Activated T-helper 1 cell treated with anti-CD3 and anti-CD28 coated beads, Interleukin-12 subunit alpha, Interleukin-12 subunit beta, Interleukin-2, Interleukin-4 antibody, amounts not matched to agents 30 ng/mL and 10 ng/mL and 1 ng/mL, durations not matched to agents 14 hours and 24 hours and 36 hours (primary cell): ENCODE measurements at regions of chr2 and their contacts with region 1.

Region 1: DNA sequence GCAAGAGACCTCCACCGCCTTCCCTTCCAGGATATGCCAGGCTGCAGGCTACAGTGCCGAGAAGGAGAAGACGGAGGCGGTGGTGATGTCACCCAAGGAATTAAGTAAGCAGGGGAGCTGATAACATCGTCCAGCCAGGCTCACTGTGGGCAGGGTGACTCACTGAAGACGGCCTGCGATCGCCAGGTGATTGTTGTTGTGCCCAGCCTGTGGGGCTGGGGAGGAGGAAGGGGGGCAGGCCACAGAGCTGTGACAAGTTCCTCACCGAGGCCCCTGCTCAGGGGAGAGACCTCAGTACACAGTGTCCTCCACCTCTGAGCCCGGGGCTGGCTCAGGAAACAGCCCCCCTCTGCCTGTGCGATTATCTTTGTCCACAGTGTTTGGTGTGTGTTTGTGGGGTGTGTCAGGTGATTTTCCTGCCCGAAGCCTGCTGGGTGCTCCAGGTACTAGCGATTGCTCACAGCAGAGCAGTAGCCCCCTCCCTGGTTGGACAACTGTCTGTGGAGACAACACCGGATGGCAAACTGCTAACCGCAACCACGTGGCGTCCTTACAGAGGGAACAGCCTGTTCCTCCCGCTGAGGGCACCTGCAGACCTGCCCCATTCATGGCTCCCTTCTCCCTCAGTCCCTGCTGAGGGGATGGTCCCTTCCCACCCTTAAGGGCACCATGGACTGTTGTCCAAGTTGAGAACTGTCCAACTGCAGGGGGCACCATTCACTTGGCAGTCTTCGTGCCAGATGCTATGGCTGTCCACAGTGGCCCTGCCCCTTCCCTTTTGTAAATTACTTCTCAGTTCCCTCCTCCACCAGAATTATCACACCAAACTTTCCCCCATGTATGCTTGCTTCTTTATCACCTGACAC is 95.1 kb downstream of the ZFP36L2 start:
- DNase-seq: peak; percentile 73
- H3K4me3 Mint-ChIP-seq: peak overlapping the region; percentile 45
- H3K27ac Mint-ChIP-seq: peak overlapping the region; percentile 83
- H3K4me1 Mint-ChIP-seq: peaks cover 83% of the 10 kb centered on the region
- H3K27me3 Mint-ChIP-seq: no peaks in the 10 kb centered on the region

Region 2: GRCh38 chr2:42947809-42948600 is 183.3 kb before region 1 on chr2:
- intact Hi-C with region 1: loop called (anchors 2 kb)
- DNase-seq: no peak
- H3K4me3 Mint-ChIP-seq: no peak overlapping the region
- H3K27ac Mint-ChIP-seq: no peak overlapping the region
- H3K4me1 Mint-ChIP-seq: peaks cover 7% of the 10 kb centered on the region
- H3K27me3 Mint-ChIP-seq: peaks cover 15% of the 10 kb centered on the region

Region 3: DNA sequence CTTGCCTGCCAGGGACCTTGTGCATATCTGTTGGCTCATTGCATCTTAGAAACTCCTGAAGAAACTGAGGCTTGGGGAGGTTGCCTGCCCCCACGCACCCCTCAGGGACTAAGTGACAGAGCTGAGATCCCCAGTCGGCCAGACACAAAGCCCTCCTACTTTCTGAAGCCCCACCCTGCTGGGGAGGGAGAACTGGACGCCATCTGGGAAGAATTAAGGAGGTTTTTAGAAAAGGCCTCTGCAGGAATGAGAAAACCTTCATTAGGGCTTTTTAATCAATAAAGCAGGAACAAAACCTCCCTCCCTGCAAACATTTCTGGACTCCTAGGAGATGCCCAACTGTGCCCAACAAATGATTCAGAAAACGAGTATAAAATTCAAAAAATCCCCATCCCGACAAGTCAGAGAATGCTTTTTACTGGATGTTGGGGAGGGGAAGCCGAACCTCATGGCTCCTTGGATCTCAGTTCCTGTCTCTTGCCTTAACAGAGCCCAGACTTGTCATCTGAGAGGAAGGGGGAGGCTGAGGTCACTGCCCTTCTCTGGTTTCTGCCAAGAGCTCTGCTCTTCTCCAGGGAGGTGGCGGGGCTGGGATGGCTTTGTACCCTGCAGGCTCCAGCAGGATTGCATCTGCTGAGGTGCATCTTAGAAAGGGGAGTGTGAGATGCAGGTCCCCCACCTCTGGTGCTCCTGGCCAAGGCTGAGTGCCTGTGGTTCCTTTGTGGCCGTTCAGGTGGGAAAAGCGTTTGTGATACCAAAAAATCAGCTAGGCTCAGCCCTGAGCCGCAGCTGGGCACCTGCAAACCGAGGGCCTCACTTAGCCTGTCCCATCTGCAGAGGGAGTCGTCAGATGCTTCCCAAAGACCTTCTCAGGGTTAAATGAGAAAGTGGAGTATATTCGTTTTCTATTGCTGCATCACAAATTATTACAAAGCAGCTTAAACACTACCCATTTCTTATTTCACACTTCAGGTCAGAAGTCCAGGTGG is 47.3 kb before region 1 on chr2:
- intact Hi-C with region 1: no loop called
- DNase-seq: no peak
- H3K4me3 Mint-ChIP-seq: no peak overlapping the region
- H3K27ac Mint-ChIP-seq: no peak overlapping the region
- H3K4me1 Mint-ChIP-seq: no peaks in the 10 kb centered on the region
- H3K27me3 Mint-ChIP-seq: peaks cover 2% of the 10 kb centered on the region

Region 4: GRCh38 chr2:43158259-43158880 is 27.1 kb after region 1 on chr2:
- intact Hi-C with region 1: loop called (anchors 1 kb)
- DNase-seq: peak; percentile 59
- H3K4me3 Mint-ChIP-seq: peak overlapping the region; percentile 74
- H3K27ac Mint-ChIP-seq: peak overlapping the region; percentile 99
- H3K4me1 Mint-ChIP-seq: peaks cover 49% of the 10 kb centered on the region
- H3K27me3 Mint-ChIP-seq: no peaks in the 10 kb centered on the region

Region 5: GRCh38 chr2:43219383-43220228 is 88.3 kb after region 1 on chr2:
- intact Hi-C with region 1: loop called (anchors 1 kb)
- DNase-seq: peak; percentile 78
- H3K4me3 Mint-ChIP-seq: peak overlapping the region; percentile 94
- H3K27ac Mint-ChIP-seq: peak overlapping the region; percentile 88
- H3K4me1 Mint-ChIP-seq: peaks cover 48% of the 10 kb centered on the region
- H3K27me3 Mint-ChIP-seq: no peaks in the 10 kb centered on the region

Region 6: GRCh38 chr2:43426305-43427031 is 295.2 kb after region 1 on chr2:
- intact Hi-C with region 1: loop called (anchors 2 kb)
- DNase-seq: peak; percentile 75
- H3K4me3 Mint-ChIP-seq: peak overlapping the region; percentile 40
- H3K27ac Mint-ChIP-seq: peak overlapping the region; percentile 26
- H3K4me1 Mint-ChIP-seq: peaks cover 39% of the 10 kb centered on the region
- H3K27me3 Mint-ChIP-seq: peaks cover 2% of the 10 kb centered on the region

Region 7: DNA sequence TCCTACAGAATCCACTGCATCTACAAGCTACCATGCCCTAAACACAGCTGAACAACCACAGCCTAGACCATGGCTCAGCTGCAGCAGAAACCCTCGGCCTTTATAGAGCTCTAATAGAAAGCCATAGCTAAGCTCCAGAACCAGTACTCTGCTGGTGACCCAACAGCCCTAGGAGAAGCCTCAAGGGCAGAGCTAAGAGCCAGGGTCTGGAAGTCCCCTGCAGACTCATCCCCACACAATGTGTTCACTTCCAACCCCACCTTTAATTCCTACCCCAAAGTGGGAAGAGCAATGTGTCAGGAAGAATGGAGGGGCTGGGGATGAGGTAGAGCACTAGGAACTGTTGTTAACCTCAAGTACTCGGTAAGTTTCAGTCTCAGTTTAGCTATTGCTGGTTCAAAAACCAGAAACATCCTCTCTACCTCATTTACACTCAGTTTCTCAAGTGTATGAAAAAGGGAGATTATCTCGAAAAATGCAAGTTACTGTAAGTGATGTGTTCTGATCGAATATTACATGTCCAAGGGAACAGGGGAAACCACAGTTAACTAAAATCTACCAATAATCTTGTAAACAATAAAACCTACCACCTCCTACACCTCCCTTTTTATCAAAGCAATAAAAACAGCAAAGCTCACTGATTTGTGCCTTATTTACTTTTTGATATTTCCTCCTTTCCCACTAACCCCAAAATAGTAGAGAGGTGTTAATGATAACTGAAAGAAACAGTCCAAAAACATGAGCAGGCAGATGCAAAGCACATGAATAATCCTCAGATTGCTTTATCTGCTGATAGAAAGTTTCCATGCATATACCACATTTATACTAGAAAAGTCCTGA is 428.4 kb after region 1 on chr2:
- intact Hi-C with region 1: loop called (anchors 5 kb)
- DNase-seq: no peak
- H3K4me3 Mint-ChIP-seq: peak overlapping the region; percentile 41
- H3K27ac Mint-ChIP-seq: peak overlapping the region; percentile 94
- H3K4me1 Mint-ChIP-seq: peaks cover 71% of the 10 kb centered on the region
- H3K27me3 Mint-ChIP-seq: no peaks in the 10 kb centered on the region